ENCODE measurements at regions of chr2 and their contacts with region 1.

Region 1: DNA sequence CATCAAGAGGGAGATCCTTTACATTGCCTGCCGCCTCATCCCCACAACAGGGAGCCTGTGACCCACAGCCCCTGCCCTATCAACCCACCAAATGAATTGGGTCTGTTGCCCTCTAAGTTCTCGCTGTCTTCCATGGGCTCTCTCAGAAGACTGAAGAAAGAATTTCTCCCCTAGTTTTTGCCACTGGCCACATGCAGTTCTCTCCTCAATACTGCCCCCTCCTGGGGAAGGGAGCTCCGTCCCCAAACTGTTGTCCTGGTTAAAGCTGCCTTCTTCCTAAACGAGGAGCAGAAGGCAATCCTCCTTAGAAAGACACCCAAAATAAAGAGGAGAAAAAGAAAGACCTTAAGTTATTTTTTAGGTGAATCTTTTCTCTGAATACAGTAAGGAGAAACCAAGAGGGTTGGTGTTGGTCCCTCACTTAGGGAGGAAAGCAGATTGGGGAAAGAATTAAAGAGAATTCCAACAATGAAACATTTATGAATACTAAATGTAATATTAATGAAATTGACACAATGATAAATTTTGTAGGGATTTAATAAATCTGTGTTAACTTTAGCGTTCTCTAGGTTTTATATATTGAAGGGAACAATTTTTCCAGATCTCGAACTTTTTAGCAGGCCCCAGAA is 31.1 kb upstream of the SATB2 start:
- DNase-seq: peak; percentile 26
- H3K4me3 ChIP-seq: no peak overlapping the region
- H3K27ac ChIP-seq: no peak overlapping the region
- H3K27me3 ChIP-seq: no peaks in the 10 kb centered on the region
- CTCF ChIP-seq: peak; percentile 93

Region 2: DNA sequence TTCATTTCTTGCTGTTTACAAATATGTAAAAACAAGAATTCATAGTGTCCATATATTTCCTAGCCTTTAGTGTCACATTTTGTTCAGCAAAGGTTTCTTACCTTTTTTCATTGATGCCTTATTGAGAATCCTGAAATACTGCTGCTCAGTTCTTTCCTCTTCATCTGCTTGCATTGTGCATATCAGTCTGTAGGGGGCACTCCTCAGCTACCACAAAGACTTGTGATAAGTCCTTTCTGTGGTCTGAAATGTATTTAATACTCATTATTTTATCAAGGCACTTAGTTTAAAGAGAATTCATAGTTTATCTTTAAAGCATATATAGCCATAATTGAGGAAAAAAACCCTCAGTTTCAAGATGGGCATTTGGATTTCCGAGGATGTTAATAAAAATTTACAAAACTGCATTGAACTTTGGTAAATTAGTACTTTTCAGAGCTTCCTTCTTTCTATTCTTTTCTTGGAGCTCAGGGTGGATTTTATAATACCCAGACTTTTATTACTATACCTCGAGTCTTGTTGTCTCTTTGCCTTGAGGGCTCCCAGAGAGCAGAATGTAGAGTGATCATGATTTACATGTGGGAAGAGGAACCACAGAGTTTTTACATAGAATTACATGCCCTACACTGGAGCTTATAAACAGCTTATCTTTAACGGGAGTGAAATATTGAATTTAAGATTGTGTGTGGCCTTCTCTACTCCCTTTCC is 1114.4 kb before region 1 on chr2:
- CTCF ChIA-PET with region 1: interaction called, 20 read pairs
- POLR2A ChIA-PET with region 1: no interaction called
- DNase-seq: peak; percentile 50
- H3K4me3 ChIP-seq: no peak overlapping the region
- H3K27ac ChIP-seq: no peak overlapping the region
- H3K27me3 ChIP-seq: no peaks in the 10 kb centered on the region
- CTCF ChIP-seq: peak; percentile 84

Region 3: GRCh38 chr2:198662905-198663304 is 826.0 kb before region 1 on chr2:
- CTCF ChIA-PET with region 1: interaction called, 50 read pairs
- POLR2A ChIA-PET with region 1: no interaction called
- DNase-seq: no peak
- H3K4me3 ChIP-seq: no peak overlapping the region
- H3K27ac ChIP-seq: no peak overlapping the region
- H3K27me3 ChIP-seq: no peaks in the 10 kb centered on the region
- CTCF ChIP-seq: no peak

Region 4: GRCh38 chr2:199471443-199472057 is 17.3 kb before region 1 on chr2:
- CTCF ChIA-PET with region 1: interaction called, 51 read pairs
- POLR2A ChIA-PET with region 1: no interaction called
- DNase-seq: no peak
- H3K4me3 ChIP-seq: no peak overlapping the region
- H3K27ac ChIP-seq: no peak overlapping the region
- H3K27me3 ChIP-seq: peaks cover 60% of the 10 kb centered on the region
- CTCF ChIP-seq: peak; percentile 78